ENCODE measurements at regions of chr11 and their contacts with region 1.

Region 1: GRCh38 chr11:107770551-107770951 is 58.7 kb upstream of the SLN start:
- DNase-seq: no peak
- H3K4me3 Mint-ChIP-seq: no peak overlapping the region
- H3K27ac Mint-ChIP-seq: peak overlapping the region; percentile 18
- H3K4me1 Mint-ChIP-seq: peaks cover 17% of the 10 kb centered on the region
- H3K27me3 Mint-ChIP-seq: peaks cover 9% of the 10 kb centered on the region

Region 2: DNA sequence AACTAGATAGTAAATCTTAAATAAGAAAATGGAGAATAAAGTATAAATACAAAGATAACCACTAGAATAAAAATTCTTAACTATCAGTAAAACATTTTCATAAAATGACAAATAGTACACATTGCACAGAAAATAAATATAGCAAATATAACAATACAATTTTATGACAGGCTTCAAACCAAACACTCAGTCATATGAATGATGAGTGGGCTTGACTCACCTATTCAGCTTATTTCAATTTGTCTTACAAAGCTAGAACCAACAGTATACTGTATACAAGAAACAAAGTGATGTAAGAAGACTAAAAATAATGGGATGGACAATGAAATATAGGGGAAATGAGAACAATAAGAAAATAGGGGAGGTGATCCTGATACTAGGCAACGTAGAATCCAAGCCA is 454.1 kb before region 1 on chr11:
- CTCF ChIA-PET with region 1: no interaction called
- POLR2A ChIA-PET with region 1: no interaction called
- DNase-seq: no peak
- H3K4me3 Mint-ChIP-seq: no peak overlapping the region
- H3K27ac Mint-ChIP-seq: no peak overlapping the region
- H3K4me1 Mint-ChIP-seq: no peaks in the 10 kb centered on the region
- H3K27me3 Mint-ChIP-seq: no peaks in the 10 kb centered on the region

Region 3: GRCh38 chr11:107565219-107565937 is 205.2 kb before region 1 on chr11 and contains the start of gene ALKBH8:
- CTCF ChIA-PET with region 1: interaction called, 21 read pairs
- POLR2A ChIA-PET with region 1: no interaction called
- DNase-seq: peak; percentile 84
- H3K4me3 Mint-ChIP-seq: peak within 1 kb of the TSS; percentile 92
- H3K27ac Mint-ChIP-seq: peak within 1 kb of the TSS; percentile 91
- H3K4me1 Mint-ChIP-seq: peaks cover 53% of the 10 kb centered on the region
- H3K27me3 Mint-ChIP-seq: no peaks in the 10 kb centered on the region
- total RNA-seq, gene ALKBH8: 7.7 to 8.4 TPM

Region 4: GRCh38 chr11:107741044-107741823 is 29.3 kb before region 1 on chr11:
- CTCF ChIA-PET with region 1: interaction called, 30 read pairs
- POLR2A ChIA-PET with region 1: no interaction called
- DNase-seq: peak; percentile 22
- H3K4me3 Mint-ChIP-seq: no peak overlapping the region
- H3K27ac Mint-ChIP-seq: no peak overlapping the region
- H3K4me1 Mint-ChIP-seq: no peaks in the 10 kb centered on the region
- H3K27me3 Mint-ChIP-seq: peaks cover 35% of the 10 kb centered on the region

Region 5: GRCh38 chr11:107752949-107753822 is 17.4 kb before region 1 on chr11:
- CTCF ChIA-PET with region 1: no interaction called
- POLR2A ChIA-PET with region 1: no interaction called
- DNase-seq: no peak
- H3K4me3 Mint-ChIP-seq: no peak overlapping the region
- H3K27ac Mint-ChIP-seq: no peak overlapping the region
- H3K4me1 Mint-ChIP-seq: no peaks in the 10 kb centered on the region
- H3K27me3 Mint-ChIP-seq: peaks cover 23% of the 10 kb centered on the region